GM12878 (cell line): ENCODE measurements at regions of chr3 and their contacts with region 1.

Region 1: DNA sequence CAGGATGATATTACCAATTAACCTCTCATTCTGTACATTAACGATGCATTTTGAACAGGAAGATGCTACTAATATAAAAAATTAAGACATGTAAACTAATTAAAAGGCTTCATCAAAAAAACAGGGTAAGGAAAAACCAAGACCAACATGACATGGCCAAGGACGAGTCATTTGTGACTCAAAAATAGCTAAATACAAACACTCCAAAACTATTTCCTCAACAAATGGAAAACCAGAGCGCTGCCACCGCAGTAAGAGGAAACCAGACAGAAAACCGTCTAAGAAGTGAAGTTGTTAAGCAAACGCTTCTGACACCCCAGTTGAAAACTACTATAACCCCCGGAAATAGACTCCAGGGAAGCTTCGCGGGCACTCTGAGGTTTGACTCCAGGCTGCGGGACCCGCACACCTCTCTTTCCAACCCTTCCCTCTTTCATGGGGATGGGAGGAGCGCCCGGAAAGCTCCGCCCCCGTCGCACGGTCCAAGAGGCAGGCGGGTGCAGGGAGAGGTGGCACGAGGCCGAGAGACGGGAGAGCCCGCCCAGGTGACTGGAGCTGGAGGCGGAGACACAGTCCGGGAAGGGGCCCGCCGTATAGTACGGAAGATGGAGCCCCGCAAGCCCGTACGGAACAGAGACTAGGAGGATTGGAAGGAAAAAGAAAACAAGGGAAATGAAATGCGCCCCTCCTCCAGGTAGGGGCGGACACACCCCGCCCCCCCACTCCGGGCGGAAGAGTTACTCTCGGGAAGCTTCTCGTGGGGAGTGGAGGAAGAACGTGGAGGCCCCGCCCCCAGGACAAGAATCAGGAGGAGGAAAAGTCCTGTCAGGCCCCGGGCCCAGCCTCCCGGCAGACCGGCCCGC is 708 bp downstream of the DCAF1 start:
- DNase-seq: peak; percentile 70
- ATAC-seq: peak; percentile 84
- H3K4me3 ChIP-seq: peak overlapping the region; percentile 71
- H3K27ac ChIP-seq: peak overlapping the region; percentile 80
- H3K4me1 ChIP-seq: peaks cover 5% of the 10 kb centered on the region
- H3K27me3 ChIP-seq: no peaks in the 10 kb centered on the region
- CTCF ChIP-seq: no peak
- EP300 ChIP-seq: no peak
- POLR2A ChIP-seq: 0 out of 2 replicates have a peak, but pooled peaks have one; percentile 0
- RAD21 ChIP-seq: no peak

Region 2: GRCh38 chr3:51384726-51385473 is 114.2 kb before region 1 on chr3 and contains the start of gene MANF:
- CTCF ChIA-PET with region 1: interaction called, 33 read pairs
- POLR2A ChIA-PET with region 1: interaction called, 26 read pairs
- RAD21 ChIA-PET with region 1: interaction called, 14 read pairs
- SMC1A ChIA-PET with region 1: interaction called, 6 read pairs
- in situ Hi-C with region 1: no loop called
- intact Hi-C with region 1: loop called (anchors 5 kb)
- DNase-seq: peak; percentile 93
- ATAC-seq: peak; percentile 97
- H3K4me3 ChIP-seq: peak within 1 kb of the TSS; percentile 96
- H3K27ac ChIP-seq: peak within 1 kb of the TSS; percentile 86
- H3K4me1 ChIP-seq: peaks cover 16% of the 10 kb centered on the region
- H3K27me3 ChIP-seq: no peaks in the 10 kb centered on the region
- CTCF ChIP-seq: peak in 1 of 3 experiments; percentile 6; a peak in 1 of 6 replicates
- EP300 ChIP-seq: peak in 1 of 2 experiments; percentile 13; a peak in 1 of 4 replicates
- POLR2A ChIP-seq: peak; percentile 98
- RAD21 ChIP-seq: no peak
- polyA plus RNA-seq, gene MANF: 22.0 to 68.0 TPM

Region 3: GRCh38 chr3:51511000-51511399 is 11.9 kb after region 1 on chr3:
- CTCF ChIA-PET with region 1: interaction called, 21 read pairs
- POLR2A ChIA-PET with region 1: interaction called, 3 read pairs
- RAD21 ChIA-PET with region 1: interaction called, 6 read pairs
- SMC1A ChIA-PET with region 1: interaction called, 6 read pairs
- in situ Hi-C with region 1: no loop called
- intact Hi-C with region 1: no loop called
- DNase-seq: no peak
- ATAC-seq: no peak
- H3K4me3 ChIP-seq: no peak overlapping the region
- H3K27ac ChIP-seq: no peak overlapping the region
- H3K4me1 ChIP-seq: no peaks in the 10 kb centered on the region
- H3K27me3 ChIP-seq: no peaks in the 10 kb centered on the region
- CTCF ChIP-seq: no peak
- EP300 ChIP-seq: no peak
- POLR2A ChIP-seq: no peak
- RAD21 ChIP-seq: no peak

Region 4: DNA sequence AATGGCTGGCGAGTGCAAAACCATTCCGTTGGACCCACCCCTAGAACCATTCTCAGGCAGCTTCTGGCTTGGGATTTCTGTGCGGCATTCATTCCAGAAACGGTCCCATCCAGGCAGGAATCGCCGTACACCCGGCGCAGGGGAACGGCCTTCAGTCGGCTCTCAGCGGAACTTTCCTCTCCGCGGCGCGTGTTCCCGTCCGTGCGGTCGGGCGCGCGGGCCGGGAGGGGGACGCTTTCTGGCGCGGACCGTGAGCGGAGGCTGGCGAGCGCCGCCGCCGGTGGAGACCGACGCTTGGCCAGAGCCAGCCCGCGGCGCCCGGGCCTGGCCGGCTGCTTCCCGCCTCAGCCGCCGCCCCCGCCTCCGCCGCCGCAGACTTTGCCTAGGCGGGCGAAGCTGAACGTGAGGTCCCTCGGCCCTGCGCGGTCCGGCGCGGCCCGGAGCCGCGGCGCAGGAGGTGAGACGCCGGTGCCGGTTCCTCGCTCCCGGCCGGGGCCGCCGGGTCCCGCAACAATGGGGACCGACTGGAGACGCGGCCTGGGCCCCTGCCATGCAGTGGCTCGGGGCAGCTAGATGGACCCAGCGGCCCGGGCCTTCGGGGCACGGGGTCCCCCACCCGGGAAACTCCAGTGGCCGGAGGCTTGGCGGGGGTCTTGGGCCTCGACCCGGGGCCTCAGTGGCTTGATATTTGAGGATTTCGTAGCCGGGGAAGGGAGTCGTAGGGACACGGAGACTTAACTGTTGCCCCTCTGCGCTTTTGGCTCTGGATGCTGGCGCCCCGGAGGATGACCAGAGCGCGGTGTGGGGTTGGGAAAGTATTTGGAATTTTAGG is 39.6 kb after region 1 on chr3 and contains the start of gene RAD54L2:
- CTCF ChIA-PET with region 1: interaction called, 72 read pairs
- POLR2A ChIA-PET with region 1: interaction called, 10 read pairs
- RAD21 ChIA-PET with region 1: interaction called, 69 read pairs
- SMC1A ChIA-PET with region 1: interaction called, 31 read pairs
- in situ Hi-C with region 1: no loop called
- intact Hi-C with region 1: loop called (anchors 2 kb)
- DNase-seq: peak; percentile 23
- ATAC-seq: peak; percentile 90
- H3K4me3 ChIP-seq: peak within 1 kb of the TSS; percentile 97
- H3K27ac ChIP-seq: peak within 1 kb of the TSS; percentile 62
- H3K4me1 ChIP-seq: no peaks in the 10 kb centered on the region; the same call in 1 of the 2 replicates
- H3K27me3 ChIP-seq: no peaks in the 10 kb centered on the region
- CTCF ChIP-seq: peak; percentile 20 to 43 (median 33); a peak in 4 of 6 replicates
- EP300 ChIP-seq: no peak
- POLR2A ChIP-seq: peak; percentile 87
- RAD21 ChIP-seq: no peak
- polyA plus RNA-seq, gene RAD54L2: 2.2 to 4.2 TPM

Region 5: GRCh38 chr3:51682079-51682478 is 183.0 kb after region 1 on chr3:
- CTCF ChIA-PET with region 1: interaction called, 243 read pairs
- POLR2A ChIA-PET with region 1: interaction called, 21 read pairs
- RAD21 ChIA-PET with region 1: interaction called, 182 read pairs
- SMC1A ChIA-PET with region 1: interaction called, 113 read pairs
- in situ Hi-C with region 1: loop called (anchors 5 kb)
- intact Hi-C with region 1: loop called (anchors 1 kb)
- DNase-seq: peak; percentile 81
- ATAC-seq: peak; percentile 89
- H3K4me3 ChIP-seq: no peak overlapping the region
- H3K27ac ChIP-seq: peak overlapping the region; percentile 51
- H3K4me1 ChIP-seq: peaks cover 38% of the 10 kb centered on the region
- H3K27me3 ChIP-seq: no peaks in the 10 kb centered on the region
- CTCF ChIP-seq: peak; percentile 90 to 99 (median 93); a peak in 5 of 6 replicates
- EP300 ChIP-seq: no peak
- POLR2A ChIP-seq: no peak
- RAD21 ChIP-seq: peak; percentile 93

Region 6: GRCh38 chr3:51799879-51800749 is 301.0 kb after region 1 on chr3:
- CTCF ChIA-PET with region 1: interaction called, 39 read pairs
- POLR2A ChIA-PET with region 1: no interaction called
- RAD21 ChIA-PET with region 1: interaction called, 28 read pairs
- SMC1A ChIA-PET with region 1: interaction called, 16 read pairs
- in situ Hi-C with region 1: loop called (anchors 5 kb)
- intact Hi-C with region 1: loop called (anchors 2 kb)
- DNase-seq: peak; percentile 5
- ATAC-seq: peak; percentile 71
- H3K4me3 ChIP-seq: no peak overlapping the region
- H3K27ac ChIP-seq: no peak overlapping the region
- H3K4me1 ChIP-seq: no peaks in the 10 kb centered on the region
- H3K27me3 ChIP-seq: no peaks in the 10 kb centered on the region; a peak in 1 of 4 replicates
- CTCF ChIP-seq: peak; percentile 70 to 74 (median 73); a peak in 5 of 6 replicates
- EP300 ChIP-seq: no peak
- POLR2A ChIP-seq: no peak
- RAD21 ChIP-seq: peak; percentile 72

Region 7: DNA sequence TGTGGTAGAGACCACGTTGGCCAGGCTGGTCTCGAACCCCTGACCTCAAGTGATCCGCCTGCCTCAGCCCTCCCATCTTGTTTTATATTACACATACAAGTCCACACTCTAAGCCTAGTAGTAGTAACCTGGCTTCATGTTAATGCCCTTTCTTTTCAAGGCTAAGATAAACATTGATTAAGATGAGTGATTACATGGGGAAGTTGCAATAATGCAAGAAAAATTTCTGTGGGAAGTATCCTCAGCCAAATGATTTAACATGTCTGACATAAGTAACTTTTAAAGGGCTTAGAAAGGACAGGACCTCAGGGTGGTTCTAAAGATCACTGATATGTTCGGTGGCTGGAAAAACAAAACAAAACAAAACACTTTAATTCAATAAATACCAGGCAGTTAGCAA is 1474.7 kb after region 1 on chr3:
- CTCF ChIA-PET with region 1: no interaction called
- POLR2A ChIA-PET with region 1: interaction called, 14 read pairs
- RAD21 ChIA-PET with region 1: no interaction called
- SMC1A ChIA-PET with region 1: no interaction called
- in situ Hi-C with region 1: no loop called
- intact Hi-C with region 1: no loop called
- DNase-seq: no peak
- ATAC-seq: no peak
- H3K4me3 ChIP-seq: no peak overlapping the region
- H3K27ac ChIP-seq: no peak overlapping the region
- H3K4me1 ChIP-seq: no peaks in the 10 kb centered on the region
- H3K27me3 ChIP-seq: no peaks in the 10 kb centered on the region
- CTCF ChIP-seq: no peak
- EP300 ChIP-seq: no peak
- POLR2A ChIP-seq: no peak
- RAD21 ChIP-seq: no peak